ENCODE measurements at regions of chr9 and their contacts with region 1.

Region 1: GRCh38 chr9:83980395-83981125 is at the start of gene RMI1:
- DNase-seq: peak; percentile 95
- ATAC-seq: peak; percentile 80
- H3K4me3 Mint-ChIP-seq: peak within 1 kb of the TSS; percentile 99
- H3K27ac Mint-ChIP-seq: peak within 1 kb of the TSS; percentile 100
- H3K4me1 Mint-ChIP-seq: peaks cover 42% of the 10 kb centered on the region
- H3K27me3 Mint-ChIP-seq: no peaks in the 10 kb centered on the region
- CTCF ChIP-seq: no peak
- total RNA-seq, gene RMI1: 6.6 and 8.5 TPM in 2 replicates

Region 2: DNA sequence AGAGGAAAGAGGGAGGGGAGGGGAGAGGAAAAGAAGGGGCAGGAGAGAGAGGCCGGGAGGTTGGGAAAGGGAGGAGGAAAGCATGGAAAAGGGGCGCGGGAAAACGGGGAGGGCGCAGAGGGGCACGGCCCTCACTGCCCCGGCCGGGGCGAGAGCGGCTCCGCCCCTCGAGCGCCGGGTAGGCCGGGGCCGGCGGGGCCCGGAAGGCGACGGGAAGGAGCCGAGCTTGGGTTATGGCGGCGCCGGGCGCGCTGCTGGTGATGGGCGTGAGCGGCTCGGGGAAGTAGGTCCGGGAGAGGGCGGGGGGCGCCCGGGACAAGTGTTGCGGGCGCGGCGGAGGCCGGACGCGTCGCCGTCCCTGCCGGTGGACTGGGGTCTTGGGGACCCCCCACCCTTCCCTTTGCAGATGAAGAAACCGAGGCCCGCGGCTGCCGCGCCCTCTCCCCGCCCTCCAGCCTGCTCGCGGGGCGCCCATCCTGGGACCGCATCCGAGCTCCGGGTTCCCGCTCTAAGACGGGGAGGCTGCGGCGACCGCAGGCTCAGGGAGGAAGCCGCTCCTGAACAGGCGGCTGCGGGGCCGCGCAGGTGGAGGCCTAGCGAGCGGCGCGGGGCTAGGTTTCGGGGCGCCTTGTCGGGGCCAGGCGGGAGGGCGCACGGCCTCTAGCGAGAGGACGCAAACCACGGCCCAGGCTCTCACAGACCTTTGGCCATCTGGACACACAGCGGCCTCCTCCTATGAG is 357.5 kb before region 1 on chr9 and contains the start of gene IDNK:
- CTCF ChIA-PET with region 1: no interaction called
- POLR2A ChIA-PET with region 1: interaction called, 16 read pairs
- intact Hi-C with region 1: loop called (anchors 1 kb)
- DNase-seq: peak; percentile 73
- ATAC-seq: peak; percentile 91
- H3K4me3 Mint-ChIP-seq: peak within 1 kb of the TSS; percentile 93
- H3K27ac Mint-ChIP-seq: peak within 1 kb of the TSS; percentile 95
- H3K4me1 Mint-ChIP-seq: peaks cover 33% of the 10 kb centered on the region
- H3K27me3 Mint-ChIP-seq: no peaks in the 10 kb centered on the region
- CTCF ChIP-seq: no peak
- total RNA-seq, gene IDNK: 7.9 and 8.4 TPM in 2 replicates

Region 3: DNA sequence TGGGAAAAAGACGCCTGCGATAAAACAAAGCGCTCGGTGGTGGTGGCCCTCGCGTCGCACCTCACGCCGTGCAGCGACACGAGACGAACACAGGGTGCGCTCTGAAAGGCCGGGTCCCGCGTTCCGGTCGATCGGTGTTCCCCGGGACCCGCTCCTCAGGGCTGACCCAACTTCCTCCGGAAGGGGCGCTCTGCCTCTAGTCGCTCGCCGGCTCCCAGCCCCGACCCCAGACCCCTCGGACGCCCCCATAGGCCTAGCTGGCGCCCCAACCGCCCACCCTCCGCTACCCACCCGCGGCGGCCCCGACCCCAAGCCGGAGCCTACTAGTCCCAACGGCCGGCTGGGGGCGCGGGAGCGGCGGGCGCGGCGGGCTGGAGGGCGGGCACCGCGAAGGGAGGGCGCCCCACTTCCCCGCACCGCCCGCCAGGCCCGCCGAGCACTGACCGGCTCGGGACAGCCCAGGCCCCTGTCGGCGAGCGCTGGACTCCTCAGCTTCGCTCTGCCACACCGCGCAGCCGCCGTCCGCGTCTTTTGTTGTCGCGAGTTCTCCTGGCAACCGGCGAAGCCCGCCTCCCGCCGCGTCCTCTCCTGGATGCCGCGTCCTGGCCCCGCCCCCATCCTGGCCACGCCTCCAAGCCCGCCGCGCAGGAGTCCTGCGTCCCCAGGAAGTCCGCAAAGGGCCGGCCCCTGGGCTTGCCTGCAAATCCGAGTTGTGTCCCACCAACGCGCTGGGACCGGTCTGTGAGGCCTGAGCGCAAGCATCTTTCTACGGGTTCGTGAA is 59.4 kb before region 1 on chr9 and contains the start of gene KIF27:
- CTCF ChIA-PET with region 1: no interaction called
- POLR2A ChIA-PET with region 1: interaction called, 41 read pairs
- intact Hi-C with region 1: loop called (anchors 1 kb)
- DNase-seq: peak; percentile 99
- ATAC-seq: peak; percentile 85
- H3K4me3 Mint-ChIP-seq: peak within 1 kb of the TSS; percentile 91
- H3K27ac Mint-ChIP-seq: peak within 1 kb of the TSS; percentile 94
- H3K4me1 Mint-ChIP-seq: peaks cover 19% of the 10 kb centered on the region
- H3K27me3 Mint-ChIP-seq: no peaks in the 10 kb centered on the region
- CTCF ChIP-seq: no peak
- total RNA-seq, gene KIF27: 4.9 and 5.1 TPM in 2 replicates

Region 4: DNA sequence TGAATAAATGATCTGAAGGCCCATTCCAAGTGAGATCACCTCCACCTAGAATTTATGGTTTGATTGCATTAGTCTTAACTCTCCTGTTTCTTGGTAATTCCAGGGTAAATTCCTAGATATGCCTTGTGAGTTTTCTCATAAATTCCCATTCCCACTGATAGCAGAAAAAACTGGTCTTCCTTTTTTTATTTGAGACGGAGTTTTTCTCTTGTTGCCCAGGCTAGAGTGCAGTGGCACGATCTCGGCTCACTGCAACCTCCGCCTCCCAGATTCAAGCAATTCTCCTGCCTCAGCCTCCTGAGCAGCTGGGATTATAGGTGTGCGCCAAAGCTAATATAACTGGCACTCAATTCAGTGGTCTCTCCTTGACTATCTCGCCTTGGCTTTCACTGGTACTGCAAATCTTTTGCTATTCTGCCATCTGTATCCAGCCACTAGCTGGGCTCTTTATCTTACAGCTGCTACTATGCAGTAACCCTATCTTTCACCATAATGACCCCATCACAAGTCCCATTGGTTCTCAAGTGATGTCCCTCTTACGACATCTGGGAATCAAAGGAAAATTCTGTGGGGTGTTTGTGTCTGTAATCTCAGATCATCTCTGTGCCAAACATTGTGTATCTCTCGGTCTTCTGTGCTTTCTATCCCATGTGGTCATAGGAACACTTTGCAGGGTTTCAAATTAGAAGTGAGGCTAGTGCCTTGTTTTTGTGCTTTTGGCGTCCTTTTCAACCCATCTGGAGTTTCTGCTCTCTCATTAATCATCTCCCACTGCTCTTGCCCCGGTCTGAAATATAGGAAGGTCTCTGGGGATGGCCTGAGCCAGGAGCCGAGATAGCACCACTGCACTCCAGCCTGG is 15.0 kb before region 1 on chr9:
- CTCF ChIA-PET with region 1: no interaction called
- POLR2A ChIA-PET with region 1: interaction called, 14 read pairs
- intact Hi-C with region 1: loop called (anchors 1 kb)
- DNase-seq: no peak
- ATAC-seq: peak; percentile 14
- H3K4me3 Mint-ChIP-seq: no peak overlapping the region
- H3K27ac Mint-ChIP-seq: peak overlapping the region; percentile 57
- H3K4me1 Mint-ChIP-seq: peaks cover 5% of the 10 kb centered on the region
- H3K27me3 Mint-ChIP-seq: no peaks in the 10 kb centered on the region
- CTCF ChIP-seq: no peak

Region 5: GRCh38 chr9:84293001-84293798 is 312.6 kb after region 1 on chr9:
- CTCF ChIA-PET with region 1: no interaction called
- POLR2A ChIA-PET with region 1: interaction called, 17 read pairs
- intact Hi-C with region 1: no loop called
- DNase-seq: no peak
- ATAC-seq: peak; percentile 67
- H3K4me3 Mint-ChIP-seq: peak overlapping the region; percentile 75
- H3K27ac Mint-ChIP-seq: peak overlapping the region; percentile 96
- H3K4me1 Mint-ChIP-seq: peaks cover 44% of the 10 kb centered on the region
- H3K27me3 Mint-ChIP-seq: no peaks in the 10 kb centered on the region
- CTCF ChIP-seq: no peak

Region 6: DNA sequence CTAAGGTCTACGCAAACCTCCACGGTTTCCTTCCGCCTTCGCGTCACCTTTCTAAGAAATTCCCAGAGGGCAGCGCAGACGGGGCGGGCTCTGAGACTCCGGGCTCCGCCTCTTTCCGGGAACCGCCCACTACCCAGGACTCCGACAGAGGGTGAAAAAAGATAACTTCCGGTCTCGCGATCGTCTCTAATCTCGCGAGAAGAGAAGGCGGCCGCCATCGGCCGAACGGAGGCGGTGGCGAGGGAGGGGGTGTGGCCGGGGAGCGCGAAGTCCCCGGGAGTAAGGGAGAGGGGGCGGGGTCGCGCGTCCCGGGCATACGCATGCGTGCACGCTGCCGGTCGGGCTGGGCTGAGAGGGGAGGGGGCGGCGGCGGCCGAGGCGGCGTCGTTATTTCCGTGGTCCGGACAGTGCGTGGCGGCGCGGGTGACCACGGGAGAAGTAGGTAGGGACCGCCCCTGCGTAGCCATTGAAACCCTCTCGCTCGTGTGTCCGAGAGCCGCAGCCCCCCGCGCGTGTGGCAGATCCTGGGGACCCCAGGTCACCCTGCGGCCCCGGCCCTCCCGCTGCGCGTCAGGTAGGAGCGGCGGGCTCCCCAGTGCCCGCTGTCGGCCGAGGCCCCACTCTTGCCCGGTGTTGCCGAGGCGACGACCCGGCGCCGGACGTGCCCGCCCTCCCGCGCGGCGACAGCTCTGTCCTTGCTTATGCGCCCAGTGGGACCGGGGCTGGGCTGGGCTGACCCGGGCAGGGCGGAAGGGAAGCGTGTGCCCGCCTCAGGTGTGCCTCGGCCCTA is 1960.5 kb after region 1 on chr9 and contains the start of gene NAA35:
- CTCF ChIA-PET with region 1: no interaction called
- POLR2A ChIA-PET with region 1: interaction called, 3 read pairs
- intact Hi-C with region 1: loop called (anchors 1 kb)
- DNase-seq: peak; percentile 97
- ATAC-seq: peak; percentile 87
- H3K4me3 Mint-ChIP-seq: peak within 1 kb of the TSS; percentile 84
- H3K27ac Mint-ChIP-seq: peak within 1 kb of the TSS; percentile 86
- H3K4me1 Mint-ChIP-seq: peaks cover 18% of the 10 kb centered on the region
- H3K27me3 Mint-ChIP-seq: peaks cover 4% of the 10 kb centered on the region
- CTCF ChIP-seq: no peak
- total RNA-seq, gene NAA35: 16.5 and 18.9 TPM in 2 replicates

Measured in activated B cell treated with CpG ODN at 0.5 μM for 24 hours (primary cell).